T-cell (primary cell): ENCODE measurements at regions of chr11 and their contacts with region 1.

Region 1: DNA sequence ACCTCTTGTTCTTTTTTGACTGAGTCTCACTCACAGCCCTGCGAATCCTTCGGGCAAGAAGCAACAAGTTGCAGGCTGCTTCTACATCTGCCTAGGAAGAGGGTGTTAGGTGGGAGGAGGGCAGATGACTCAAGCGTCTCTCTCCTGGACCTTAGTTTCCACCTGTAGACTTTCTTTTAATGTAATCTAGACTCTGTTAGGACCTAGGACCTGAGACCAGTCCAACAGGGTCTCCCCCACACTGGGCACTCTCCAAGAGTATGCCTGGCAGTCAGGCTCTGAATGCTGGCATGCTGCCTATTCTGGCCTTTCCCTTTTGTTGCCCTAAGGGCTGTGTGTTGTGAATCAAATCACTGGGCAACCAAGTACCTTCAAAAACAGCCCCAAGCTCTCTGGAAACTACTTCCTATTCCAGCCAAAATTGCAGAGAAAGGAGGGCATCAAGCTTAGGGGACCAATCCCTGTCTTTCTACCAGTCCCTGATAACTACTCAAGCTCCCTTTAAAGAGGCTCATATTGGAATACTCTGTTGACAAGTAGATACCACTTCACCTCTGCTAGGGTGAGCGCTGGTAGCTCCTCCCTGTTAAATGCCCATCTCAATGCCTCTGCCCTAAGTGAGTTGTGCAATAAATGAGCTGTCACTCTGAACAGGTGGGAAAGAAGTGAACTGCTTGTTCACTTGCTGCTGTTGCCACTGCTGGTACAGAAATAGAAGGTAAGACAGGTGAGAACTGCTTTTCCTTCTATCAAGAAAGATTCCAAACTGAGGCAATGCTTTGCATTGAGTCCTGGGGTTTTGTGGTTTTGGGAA is at the start of gene BBOX1:
- DNase-seq: no peak
- ATAC-seq: no peak
- H3K4me3 ChIP-seq: no peak within 1 kb of the TSS
- H3K4me3 Mint-ChIP-seq: no peak within 1 kb of the TSS
- H3K27ac ChIP-seq: no peak within 1 kb of the TSS
- H3K27ac Mint-ChIP-seq: no peak within 1 kb of the TSS
- H3K4me1 ChIP-seq: no peaks in the 10 kb centered on the region
- H3K4me1 Mint-ChIP-seq: no peaks in the 10 kb centered on the region
- H3K27me3 ChIP-seq: no peaks in the 10 kb centered on the region
- H3K27me3 Mint-ChIP-seq: no peaks in the 10 kb centered on the region
- total RNA-seq, gene BBOX1: not detected

Region 2: GRCh38 chr11:27076121-27076589 is 35.6 kb after region 1 on chr11:
- CTCF ChIA-PET with region 1: no interaction called
- POLR2A ChIA-PET with region 1: interaction called in 1 of 2 experiments, 12 read pairs
- DNase-seq: no peak
- ATAC-seq: no peak
- H3K4me3 ChIP-seq: no peak overlapping the region
- H3K4me3 Mint-ChIP-seq: no peak overlapping the region
- H3K27ac ChIP-seq: no peak overlapping the region
- H3K27ac Mint-ChIP-seq: no peak overlapping the region
- H3K4me1 ChIP-seq: no peaks in the 10 kb centered on the region
- H3K4me1 Mint-ChIP-seq: no peaks in the 10 kb centered on the region
- H3K27me3 ChIP-seq: no peaks in the 10 kb centered on the region
- H3K27me3 Mint-ChIP-seq: no peaks in the 10 kb centered on the region